ENCODE measurements at regions of chr3 and their contacts with region 1.

Region 1: DNA sequence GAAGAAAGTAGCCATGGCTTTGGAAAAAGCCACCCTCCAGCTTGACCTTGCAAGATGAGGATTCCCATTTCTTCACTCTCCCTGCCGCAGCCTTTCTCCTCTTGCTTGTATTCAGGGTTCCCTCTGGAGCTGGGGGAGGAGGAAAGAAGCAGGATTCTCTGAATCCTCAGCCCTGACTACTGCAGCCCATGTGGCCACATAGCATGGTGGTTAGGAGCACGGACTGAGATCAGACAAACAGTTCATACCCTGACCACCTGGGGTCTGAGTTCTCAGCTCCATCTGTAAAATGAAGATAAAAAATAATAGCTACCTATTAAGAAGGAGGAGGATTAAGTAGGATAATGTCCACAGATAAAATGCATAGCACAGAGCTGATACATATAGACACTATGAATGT is 72.3 kb downstream of the NMD3 start:
- DNase-seq: no peak
- H3K4me3 ChIP-seq: no peak overlapping the region
- H3K27ac ChIP-seq: no peak overlapping the region
- H3K4me1 ChIP-seq: no peaks in the 10 kb centered on the region
- H3K27me3 ChIP-seq: no peaks in the 10 kb centered on the region
- CTCF ChIP-seq: no peak
- EP300 ChIP-seq: no peak
- RAD21 ChIP-seq: no peak

Region 2: DNA sequence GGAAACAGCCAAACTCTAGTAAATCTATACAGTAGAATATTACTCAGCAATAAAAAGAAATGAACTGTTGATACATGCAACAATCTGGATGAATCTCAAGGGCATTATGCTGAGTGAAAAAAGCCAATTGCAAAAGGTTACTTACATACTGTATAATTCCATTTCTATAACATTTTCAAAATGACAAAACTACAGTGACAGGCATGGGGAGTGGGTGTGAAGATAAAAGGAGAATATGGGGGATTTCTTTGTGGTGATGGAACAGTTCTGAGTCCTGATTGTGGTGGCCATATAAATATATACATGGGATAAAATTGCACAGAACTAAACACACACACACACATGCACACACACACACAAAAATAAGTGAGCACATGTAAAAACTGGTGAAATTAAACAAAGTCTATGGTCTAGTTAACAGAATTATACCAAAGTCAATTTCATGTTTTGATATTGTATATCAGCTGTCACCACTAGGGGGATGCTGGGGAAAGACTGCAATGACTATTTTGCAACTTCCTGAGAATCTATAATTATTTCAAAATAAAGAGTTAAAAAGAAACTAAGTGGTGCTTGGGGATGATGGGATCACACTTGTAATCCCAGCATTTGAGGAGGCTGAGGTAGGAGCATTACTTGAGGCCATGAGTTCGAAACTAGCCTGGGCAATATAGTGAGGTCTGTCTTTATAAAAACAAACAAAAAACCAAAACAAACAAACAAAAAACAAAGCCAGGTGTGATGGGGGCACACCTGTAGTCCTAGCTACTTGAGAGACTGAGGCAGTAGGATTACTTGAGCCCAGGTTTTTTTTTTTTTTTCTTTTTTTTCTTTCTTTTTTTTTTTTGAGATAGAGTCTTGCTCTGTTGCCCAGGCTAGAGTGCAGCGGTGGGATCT is 12.0 kb after region 1 on chr3:
- CTCF ChIA-PET with region 1: interaction called, 10 read pairs
- POLR2A ChIA-PET with region 1: no interaction called
- DNase-seq: peak; percentile 28
- H3K4me3 ChIP-seq: no peak overlapping the region; a peak in 1 of 4 replicates
- H3K27ac ChIP-seq: no peak overlapping the region
- H3K4me1 ChIP-seq: no peaks in the 10 kb centered on the region
- H3K27me3 ChIP-seq: no peaks in the 10 kb centered on the region
- CTCF ChIP-seq: peak; percentile 84
- EP300 ChIP-seq: no peak
- RAD21 ChIP-seq: peak; percentile 48

Region 3: GRCh38 chr3:161323926-161324621 is 30.7 kb after region 1 on chr3:
- CTCF ChIA-PET with region 1: no interaction called
- POLR2A ChIA-PET with region 1: no interaction called
- DNase-seq: no peak
- H3K4me3 ChIP-seq: no peak overlapping the region
- H3K27ac ChIP-seq: no peak overlapping the region
- H3K4me1 ChIP-seq: no peaks in the 10 kb centered on the region
- H3K27me3 ChIP-seq: no peaks in the 10 kb centered on the region
- CTCF ChIP-seq: no peak
- EP300 ChIP-seq: no peak
- RAD21 ChIP-seq: no peak